PC-3 (cell line): ENCODE measurements at regions of chr16 and their contacts with region 1.

Region 1: DNA sequence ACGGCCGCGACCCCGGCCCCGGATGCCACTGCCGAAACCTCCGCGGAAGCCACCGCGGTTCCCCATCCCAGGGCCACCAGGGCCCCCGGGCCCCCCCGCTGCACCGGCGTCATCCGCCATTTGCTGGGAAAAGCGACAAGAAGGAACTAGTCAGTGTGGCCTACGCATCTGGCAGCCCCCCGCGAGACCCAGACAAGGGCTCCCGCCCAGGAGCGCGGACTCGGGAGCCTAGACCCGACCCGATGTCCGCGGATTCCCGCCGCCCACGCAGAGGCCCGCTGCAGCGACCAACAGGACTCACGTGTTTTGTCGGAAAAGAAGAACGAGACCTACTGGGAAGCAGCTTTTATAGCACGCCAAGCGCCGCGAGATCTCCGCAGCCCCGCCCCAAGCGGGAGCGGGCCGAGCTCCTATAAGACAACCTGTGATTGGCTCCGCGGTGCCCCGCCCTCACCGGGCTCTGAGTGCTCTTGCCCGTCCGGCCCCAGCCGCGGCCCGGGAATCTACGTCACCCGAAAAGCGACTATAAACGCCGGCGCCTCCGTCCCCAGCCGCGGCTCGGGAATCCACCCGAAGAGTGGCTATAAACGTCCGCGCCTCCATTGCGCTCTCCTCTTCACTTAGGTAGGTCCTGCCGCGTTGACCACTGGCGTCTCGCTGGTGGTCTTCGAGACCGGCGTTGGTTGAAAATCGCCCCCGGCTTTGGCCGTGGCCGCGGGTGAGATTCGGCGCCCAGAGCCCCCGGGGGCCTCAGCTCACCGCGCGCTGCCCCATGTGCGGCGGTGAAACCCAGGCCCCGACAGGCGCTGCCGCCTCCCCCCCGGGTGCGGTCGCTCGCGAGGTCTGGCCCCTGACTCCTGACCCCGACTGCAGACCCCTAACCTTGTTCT is at the start of gene RPS2:
- DNase-seq: peak; percentile 95
- ATAC-seq: peak; percentile 74
- H3K4me3 ChIP-seq: peak within 1 kb of the TSS; percentile 96
- H3K27ac ChIP-seq: peak within 1 kb of the TSS; percentile 47
- H3K4me1 ChIP-seq: peaks cover 9% of the 10 kb centered on the region; the same call in 1 of the 2 replicates
- H3K27me3 ChIP-seq: no peaks in the 10 kb centered on the region
- CTCF ChIP-seq: no peak
- total RNA-seq, gene RPS2: 2,234 and 2,721 TPM in 2 replicates

Region 2: DNA sequence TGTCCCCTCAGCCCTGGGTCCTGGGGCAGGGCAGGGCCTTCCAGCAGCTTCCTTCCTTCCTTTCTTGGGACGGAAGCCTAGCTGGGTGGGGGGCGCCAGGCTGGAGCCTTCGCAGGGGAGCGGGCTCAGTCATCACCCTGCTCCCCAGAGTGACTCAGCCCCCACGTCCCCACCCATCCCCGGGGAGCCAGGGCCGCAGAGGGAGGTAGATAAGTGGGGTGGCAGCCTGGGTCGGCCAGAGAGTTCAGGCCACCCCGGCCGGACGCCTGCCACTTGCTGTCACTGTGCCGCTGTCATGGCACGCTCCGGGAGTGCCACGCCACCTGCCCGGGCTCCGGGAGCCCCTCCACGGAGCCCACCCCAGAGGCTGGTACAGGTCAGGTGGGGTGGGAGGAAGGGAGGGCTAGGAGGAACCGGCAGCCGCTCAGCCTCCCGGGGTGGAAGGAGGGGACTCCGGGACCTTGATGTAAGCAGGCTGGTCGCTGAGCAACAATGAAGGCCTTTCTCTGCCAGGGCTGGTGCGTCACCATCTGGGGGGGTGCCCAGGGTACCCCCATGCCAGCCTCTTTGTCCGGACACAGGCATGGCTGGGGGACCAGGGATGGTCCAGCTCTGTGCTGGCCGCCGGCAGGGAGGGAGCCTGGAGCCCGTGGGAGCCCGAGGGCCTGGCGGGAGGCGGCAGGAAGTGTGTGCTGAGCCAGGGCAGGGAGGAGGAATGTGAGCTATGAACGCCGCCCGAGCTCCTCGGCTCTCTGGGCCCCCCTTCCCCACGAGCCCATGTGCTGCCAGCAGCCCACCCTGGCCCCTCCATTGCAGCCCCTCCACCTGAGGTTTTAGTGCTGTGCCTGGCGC is 68.5 kb after region 1 on chr16:
- CTCF ChIA-PET with region 1: no interaction called
- POLR2A ChIA-PET with region 1: no interaction called
- intact Hi-C with region 1: no loop called
- DNase-seq: peak; percentile 46
- ATAC-seq: peak; percentile 41
- H3K4me3 ChIP-seq: peak overlapping the region; percentile 67
- H3K27ac ChIP-seq: peak overlapping the region; percentile 90
- H3K4me1 ChIP-seq: peaks cover 49% of the 10 kb centered on the region
- H3K27me3 ChIP-seq: no peaks in the 10 kb centered on the region
- CTCF ChIP-seq: no peak

Region 3: DNA sequence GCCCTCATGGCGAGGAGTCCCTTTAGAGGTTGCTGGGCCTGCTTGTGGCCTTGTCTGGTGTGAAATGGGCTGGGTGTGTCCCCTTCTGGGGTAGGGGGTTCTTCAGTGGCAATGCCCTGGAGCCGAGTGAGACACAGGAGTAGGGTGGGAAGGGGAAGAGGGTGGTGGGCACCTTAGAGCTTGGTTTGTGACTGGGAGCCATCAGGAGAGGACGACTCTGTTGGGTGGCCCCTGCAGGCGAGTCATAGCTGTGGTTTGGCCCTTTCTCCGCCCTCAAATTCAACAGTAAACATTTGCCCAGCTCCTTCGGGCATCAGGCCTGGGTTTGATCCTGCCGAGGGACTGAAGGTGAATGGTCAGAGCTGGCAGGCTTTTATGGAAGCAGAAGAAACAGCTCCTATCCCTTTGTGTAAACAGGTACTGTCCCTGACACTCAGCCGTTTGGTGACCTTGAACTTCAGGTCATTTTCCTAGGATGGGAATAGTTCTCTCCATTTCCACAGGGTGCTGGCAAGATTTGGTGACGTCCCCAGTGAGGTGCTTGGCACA is 261.6 kb after region 1 on chr16:
- CTCF ChIA-PET with region 1: no interaction called
- POLR2A ChIA-PET with region 1: interaction called, 25 read pairs
- intact Hi-C with region 1: no loop called
- DNase-seq: peak; percentile 53
- ATAC-seq: peak; percentile 41
- H3K4me3 ChIP-seq: no peak overlapping the region
- H3K27ac ChIP-seq: no peak overlapping the region
- H3K4me1 ChIP-seq: peaks cover 12% of the 10 kb centered on the region
- H3K27me3 ChIP-seq: no peaks in the 10 kb centered on the region
- CTCF ChIP-seq: no peak

Region 4: DNA sequence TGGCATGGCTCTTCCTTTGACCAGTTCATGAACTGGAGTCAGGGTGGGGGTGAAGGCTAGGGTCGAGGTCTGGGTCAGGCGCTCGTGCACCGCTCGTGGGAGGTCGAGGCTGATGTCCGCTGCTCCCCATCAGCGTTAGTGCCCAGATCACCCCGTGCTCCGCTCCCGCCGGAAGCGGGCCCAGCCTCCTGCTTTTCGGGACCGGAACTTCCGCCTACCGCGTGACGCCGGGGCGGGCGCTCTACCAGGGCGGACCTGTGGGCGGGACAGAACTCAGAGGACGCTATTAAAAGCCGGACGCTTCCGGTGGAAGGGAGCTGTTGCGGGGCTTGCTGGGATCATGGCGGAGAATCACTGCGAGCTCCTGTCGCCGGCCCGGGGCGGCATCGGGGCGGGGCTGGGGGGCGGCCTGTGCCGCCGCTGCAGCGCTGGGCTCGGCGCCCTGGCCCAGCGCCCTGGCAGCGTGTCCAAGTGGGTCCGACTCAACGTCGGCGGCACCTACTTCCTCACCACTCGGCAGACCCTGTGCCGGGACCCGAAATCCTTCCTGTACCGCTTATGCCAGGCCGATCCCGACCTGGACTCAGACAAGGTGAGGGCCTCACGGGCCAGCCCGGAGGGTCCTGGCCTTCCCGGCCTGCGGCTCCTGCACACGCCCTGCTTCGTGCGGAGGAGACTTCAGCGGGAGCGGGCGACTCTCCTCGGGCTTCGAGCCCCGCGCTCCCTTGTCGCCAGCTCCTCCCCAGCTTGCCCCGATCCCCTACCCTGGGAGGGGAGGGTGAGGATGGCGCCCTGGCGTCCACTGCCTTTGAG is 717.7 kb after region 1 on chr16 and contains the start of gene KCTD5:
- CTCF ChIA-PET with region 1: no interaction called
- POLR2A ChIA-PET with region 1: no interaction called
- intact Hi-C with region 1: no loop called
- DNase-seq: peak; percentile 92
- ATAC-seq: peak; percentile 82
- H3K4me3 ChIP-seq: peak within 1 kb of the TSS; percentile 99
- H3K27ac ChIP-seq: peak within 1 kb of the TSS; percentile 96
- H3K4me1 ChIP-seq: peaks cover 24% of the 10 kb centered on the region
- H3K27me3 ChIP-seq: no peaks in the 10 kb centered on the region
- CTCF ChIP-seq: no peak
- total RNA-seq, gene KCTD5: 52.2 and 62.1 TPM in 2 replicates